PC-3 (cell line): ENCODE measurements at regions of chr9 and their contacts with region 1.

Region 1: DNA sequence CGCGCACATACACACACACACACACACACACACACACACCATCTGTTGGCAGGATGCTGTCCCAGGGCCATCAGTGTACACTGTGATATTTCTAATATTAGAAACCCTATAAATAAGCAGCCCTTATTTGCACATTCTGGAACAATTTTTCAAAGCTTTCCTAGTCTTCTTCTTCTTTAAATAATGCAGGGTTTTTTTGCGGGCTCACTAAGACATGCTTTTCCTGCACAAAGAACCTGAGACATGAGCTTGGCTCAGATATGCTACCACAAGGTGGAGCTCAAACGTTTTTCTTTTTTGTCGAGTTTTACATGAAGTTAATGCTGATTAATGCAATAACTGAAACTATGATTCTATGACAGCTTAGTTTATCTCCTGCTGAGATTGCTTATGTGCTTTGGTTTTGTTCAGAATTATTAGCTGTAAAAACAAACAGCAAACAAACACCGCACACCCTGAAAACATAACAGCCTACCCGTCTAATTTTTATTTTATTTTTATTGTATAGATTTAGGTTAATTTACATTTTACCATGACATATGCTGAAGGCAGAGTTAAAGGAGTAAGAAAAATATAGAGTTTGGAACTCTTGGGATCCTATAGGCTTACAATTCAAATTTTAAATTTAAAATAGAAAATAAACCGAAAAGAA is 95.8 kb downstream of the ALDH1A1 start:
- DNase-seq: peak; percentile 65
- ATAC-seq: peak; percentile 35; the same call in 1 of the 2 replicates
- H3K4me3 ChIP-seq: no peak overlapping the region
- H3K27ac ChIP-seq: no peak overlapping the region
- H3K4me1 ChIP-seq: no peaks in the 10 kb centered on the region
- H3K27me3 ChIP-seq: no peaks in the 10 kb centered on the region
- CTCF ChIP-seq: peak; percentile 62

Region 2: DNA sequence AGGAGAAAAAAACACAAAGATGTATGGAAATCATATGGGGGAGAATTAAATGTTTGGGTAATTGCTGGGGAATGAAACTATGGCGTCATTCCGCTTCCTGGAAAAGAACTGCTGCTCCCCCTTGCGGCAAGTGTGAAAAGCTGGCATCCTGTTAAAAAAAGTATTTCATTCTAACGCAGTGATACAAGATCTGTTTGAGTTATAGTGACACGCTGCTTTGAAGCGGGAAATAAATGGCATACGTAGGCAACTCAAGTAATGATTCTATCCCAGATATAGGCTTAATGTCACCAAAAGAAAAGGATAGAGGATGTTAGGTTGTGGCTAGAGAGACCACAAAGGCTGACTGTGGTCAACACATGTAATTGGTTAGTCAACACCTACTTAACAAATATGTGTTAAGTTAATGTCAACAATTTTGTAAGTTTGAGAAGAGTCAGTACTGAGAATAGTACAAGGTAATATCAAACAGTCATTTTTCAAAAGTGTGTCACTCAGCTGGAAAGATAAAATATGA is 166.0 kb after region 1 on chr9:
- CTCF ChIA-PET with region 1: no interaction called
- POLR2A ChIA-PET with region 1: no interaction called
- intact Hi-C with region 1: loop called (anchors 1 kb)
- DNase-seq: peak; percentile 56
- ATAC-seq: peak; percentile 40
- H3K4me3 ChIP-seq: no peak overlapping the region
- H3K27ac ChIP-seq: no peak overlapping the region
- H3K4me1 ChIP-seq: no peaks in the 10 kb centered on the region
- H3K27me3 ChIP-seq: peaks cover 13% of the 10 kb centered on the region; the same call in 1 of the 2 replicates
- CTCF ChIP-seq: peak; percentile 78

Region 3: GRCh38 chr9:73081979-73082657 is 225.0 kb after region 1 on chr9:
- CTCF ChIA-PET with region 1: no interaction called
- POLR2A ChIA-PET with region 1: no interaction called
- intact Hi-C with region 1: loop called (anchors 5 kb)
- DNase-seq: peak; percentile 43
- ATAC-seq: no peak
- H3K4me3 ChIP-seq: no peak overlapping the region
- H3K27ac ChIP-seq: no peak overlapping the region
- H3K4me1 ChIP-seq: peaks cover 15% of the 10 kb centered on the region
- H3K27me3 ChIP-seq: peaks cover 8% of the 10 kb centered on the region; the same call in 1 of the 2 replicates
- CTCF ChIP-seq: peak; percentile 70

Region 4: GRCh38 chr9:73200694-73201452 is 343.8 kb after region 1 on chr9:
- CTCF ChIA-PET with region 1: no interaction called
- POLR2A ChIA-PET with region 1: no interaction called
- intact Hi-C with region 1: loop called (anchors 5 kb)
- DNase-seq: peak; percentile 68
- ATAC-seq: peak; percentile 54; the same call in 1 of the 2 replicates
- H3K4me3 ChIP-seq: no peak overlapping the region
- H3K27ac ChIP-seq: no peak overlapping the region
- H3K4me1 ChIP-seq: no peaks in the 10 kb centered on the region
- H3K27me3 ChIP-seq: no peaks in the 10 kb centered on the region
- CTCF ChIP-seq: peak; percentile 65